PC-3 (cell line): ENCODE measurements at regions of chr2 and their contacts with region 1.

Region 1: GRCh38 chr2:8681786-8682692 is at the start of gene ID2:
- DNase-seq: peak; percentile 99
- ATAC-seq: peak; percentile 41
- H3K4me3 ChIP-seq: peak within 1 kb of the TSS; percentile 88
- H3K27ac ChIP-seq: peak within 1 kb of the TSS; percentile 16
- H3K4me1 ChIP-seq: peaks cover 42% of the 10 kb centered on the region
- H3K27me3 ChIP-seq: no peaks in the 10 kb centered on the region
- CTCF ChIP-seq: no peak
- total RNA-seq, gene ID2: 92.1 and 93.3 TPM in 2 replicates

Region 2: DNA sequence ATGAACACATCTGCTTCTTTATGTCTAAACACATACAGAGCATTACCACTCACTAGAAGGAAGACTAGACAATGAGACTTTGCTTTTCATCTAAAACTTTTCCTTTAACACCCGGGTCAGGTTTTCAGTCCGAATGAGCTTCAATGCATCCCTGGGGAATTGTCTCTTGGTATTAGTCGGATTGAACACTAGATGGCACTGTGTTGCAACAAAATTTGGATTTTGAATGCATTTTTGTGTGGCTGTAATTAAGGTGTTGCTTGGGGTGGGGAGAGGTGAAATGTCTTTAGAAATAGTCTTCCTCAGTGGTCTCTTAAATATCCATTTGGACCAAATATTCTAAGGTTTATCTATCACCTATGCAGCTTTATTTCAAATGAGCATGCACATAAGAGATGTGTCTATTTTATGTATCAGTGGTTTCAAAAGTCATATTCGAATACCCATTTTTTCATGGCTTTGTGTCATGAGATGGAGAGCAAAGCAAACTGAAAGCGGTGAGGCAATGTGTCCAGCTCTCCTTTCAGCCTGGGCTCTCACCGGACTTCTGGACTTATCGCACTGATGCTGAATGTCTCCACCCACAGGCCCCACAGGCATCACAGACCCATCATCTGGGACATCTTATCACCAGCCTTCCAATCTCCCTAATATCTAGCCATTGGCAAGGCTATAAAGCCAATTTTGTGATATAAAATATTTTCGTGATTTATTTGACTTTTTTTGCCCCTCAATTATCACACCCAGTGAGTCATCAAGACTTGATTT is 1254.6 kb before region 1 on chr2:
- CTCF ChIA-PET with region 1: interaction called, 6 read pairs
- POLR2A ChIA-PET with region 1: no interaction called
- intact Hi-C with region 1: loop called (anchors 1 kb)
- DNase-seq: peak; percentile 84
- ATAC-seq: peak; percentile 43
- H3K4me3 ChIP-seq: no peak overlapping the region
- H3K27ac ChIP-seq: peak overlapping the region; percentile 22; the same call in 1 of the 2 replicates
- H3K4me1 ChIP-seq: no peaks in the 10 kb centered on the region
- H3K27me3 ChIP-seq: no peaks in the 10 kb centered on the region
- CTCF ChIP-seq: peak; percentile 89

Region 3: GRCh38 chr2:7725171-7725849 is 956.7 kb before region 1 on chr2:
- CTCF ChIA-PET with region 1: no interaction called
- POLR2A ChIA-PET with region 1: interaction called, 3 read pairs
- intact Hi-C with region 1: loop called (anchors 1 kb)
- DNase-seq: peak; percentile 28
- ATAC-seq: peak; percentile 49
- H3K4me3 ChIP-seq: no peak overlapping the region
- H3K27ac ChIP-seq: no peak overlapping the region
- H3K4me1 ChIP-seq: peaks cover 4% of the 10 kb centered on the region; the same call in 1 of the 2 replicates
- H3K27me3 ChIP-seq: no peaks in the 10 kb centered on the region
- CTCF ChIP-seq: peak; percentile 47

Region 4: GRCh38 chr2:8004250-8004681 is 677.8 kb before region 1 on chr2:
- CTCF ChIA-PET with region 1: no interaction called
- POLR2A ChIA-PET with region 1: no interaction called
- intact Hi-C with region 1: loop called (anchors 2 kb)
- DNase-seq: peak; percentile 48
- ATAC-seq: peak; percentile 13; the same call in 1 of the 2 replicates
- H3K4me3 ChIP-seq: no peak overlapping the region
- H3K27ac ChIP-seq: peak overlapping the region; percentile 60
- H3K4me1 ChIP-seq: peaks cover 22% of the 10 kb centered on the region
- H3K27me3 ChIP-seq: no peaks in the 10 kb centered on the region
- CTCF ChIP-seq: no peak

Region 5: DNA sequence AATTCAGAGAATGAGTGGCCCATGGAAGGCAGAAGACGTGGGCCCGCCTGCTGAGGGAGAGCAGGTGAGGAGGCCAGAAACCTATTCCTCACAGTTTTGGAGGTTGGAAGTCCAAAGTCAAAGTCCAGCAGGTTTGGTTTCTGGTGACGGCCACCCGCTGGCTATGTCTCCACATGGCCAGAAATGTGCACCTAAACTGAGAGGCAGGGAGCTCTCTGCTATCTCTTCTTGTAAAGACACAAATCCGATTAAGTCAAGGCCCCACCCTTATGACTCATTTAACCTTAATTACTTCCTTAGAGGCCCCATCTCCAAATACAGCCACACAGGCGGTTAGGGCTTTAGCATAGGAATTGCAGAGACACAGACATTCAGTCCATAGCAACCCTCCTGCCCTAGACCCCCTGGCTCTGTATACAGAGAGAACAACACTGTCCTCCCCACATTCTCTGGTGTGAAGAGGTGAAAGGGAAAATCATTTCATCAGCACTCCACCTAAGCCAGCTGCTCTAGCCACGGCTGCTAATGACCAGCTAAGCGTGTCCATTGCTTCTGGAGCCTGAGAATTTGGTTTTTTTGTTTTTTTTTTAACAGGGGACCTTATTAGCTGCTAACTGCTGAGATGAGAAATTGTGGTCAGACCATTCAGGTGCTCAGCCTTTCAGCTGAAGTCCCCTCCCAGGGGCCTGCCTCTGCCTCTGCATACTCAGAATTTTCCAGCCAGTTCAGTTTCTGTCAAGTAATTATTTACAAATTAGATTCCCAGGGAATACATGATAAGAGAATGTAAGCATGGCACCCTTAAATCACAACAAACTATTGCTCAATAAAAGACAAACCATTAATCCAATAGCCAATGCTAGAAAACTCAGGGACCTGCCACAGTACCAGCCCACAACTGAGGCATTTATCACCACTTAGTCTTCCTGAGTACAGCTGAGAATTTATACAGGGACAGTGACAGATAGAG is 368.9 kb before region 1 on chr2:
- CTCF ChIA-PET with region 1: no interaction called
- POLR2A ChIA-PET with region 1: no interaction called
- intact Hi-C with region 1: loop called (anchors 2 kb)
- DNase-seq: peak; percentile 74
- ATAC-seq: peak; percentile 84
- H3K4me3 ChIP-seq: no peak overlapping the region
- H3K27ac ChIP-seq: 0 out of 2 replicates have a peak overlapping the region, but pooled peaks have one; percentile 0
- H3K4me1 ChIP-seq: peaks cover 23% of the 10 kb centered on the region
- H3K27me3 ChIP-seq: no peaks in the 10 kb centered on the region
- CTCF ChIP-seq: no peak

Region 6: GRCh38 chr2:8583400-8584173 is 98.5 kb before region 1 on chr2:
- CTCF ChIA-PET with region 1: no interaction called
- POLR2A ChIA-PET with region 1: no interaction called
- intact Hi-C with region 1: loop called (anchors 5 kb)
- DNase-seq: peak; percentile 79
- ATAC-seq: peak; percentile 99
- H3K4me3 ChIP-seq: peak overlapping the region; percentile 35; the same call in 1 of the 2 replicates
- H3K27ac ChIP-seq: no peak overlapping the region
- H3K4me1 ChIP-seq: peaks cover 6% of the 10 kb centered on the region; the same call in 1 of the 2 replicates
- H3K27me3 ChIP-seq: no peaks in the 10 kb centered on the region
- CTCF ChIP-seq: no peak